Activated CD4-positive, alpha-beta memory T cell treated with anti-CD3 and anti-CD28 coated beads, Interleukin-2, amount 10 ng/mL, durations not matched to agents 7 days and 5 days (primary cell): ENCODE measurements at regions of chr20 and their contacts with region 1.

Region 1: DNA sequence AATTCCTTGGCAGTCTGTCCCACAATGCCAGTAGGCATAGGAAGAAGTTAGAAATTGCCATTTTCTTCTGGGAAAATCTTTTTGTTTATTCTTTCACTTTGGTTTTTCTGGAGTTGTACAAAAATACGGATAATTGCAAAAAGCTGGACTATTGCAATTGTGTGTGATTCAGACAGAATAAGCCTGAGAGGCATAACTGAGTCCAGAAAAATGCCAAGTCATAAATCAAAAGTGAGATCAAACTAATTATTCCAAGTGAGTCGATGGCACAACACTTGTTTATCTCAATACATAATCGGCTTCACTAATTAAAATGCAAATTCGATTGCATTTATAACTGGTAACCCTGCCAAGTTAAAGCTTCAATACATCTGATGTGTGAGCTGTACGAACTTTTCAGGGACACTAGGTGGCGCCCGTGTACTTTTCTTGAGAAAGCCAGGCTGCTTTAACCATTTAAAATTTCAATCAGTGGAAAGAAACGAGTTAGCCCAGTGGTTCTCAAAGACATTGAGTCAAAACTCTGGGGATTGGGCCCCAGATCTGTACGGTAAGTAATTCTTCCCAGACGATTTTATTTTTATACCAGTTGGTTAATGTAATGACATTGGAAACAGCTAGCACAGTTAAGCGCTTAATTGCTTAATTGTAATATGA is 102.6 kb downstream of the LAMP5 start:
- DNase-seq: peak; percentile 49
- H3K4me3 Mint-ChIP-seq: no peak overlapping the region
- H3K27ac Mint-ChIP-seq: no peak overlapping the region
- H3K4me1 Mint-ChIP-seq: no peaks in the 10 kb centered on the region
- H3K27me3 Mint-ChIP-seq: peaks cover 7% of the 10 kb centered on the region

Region 2: DNA sequence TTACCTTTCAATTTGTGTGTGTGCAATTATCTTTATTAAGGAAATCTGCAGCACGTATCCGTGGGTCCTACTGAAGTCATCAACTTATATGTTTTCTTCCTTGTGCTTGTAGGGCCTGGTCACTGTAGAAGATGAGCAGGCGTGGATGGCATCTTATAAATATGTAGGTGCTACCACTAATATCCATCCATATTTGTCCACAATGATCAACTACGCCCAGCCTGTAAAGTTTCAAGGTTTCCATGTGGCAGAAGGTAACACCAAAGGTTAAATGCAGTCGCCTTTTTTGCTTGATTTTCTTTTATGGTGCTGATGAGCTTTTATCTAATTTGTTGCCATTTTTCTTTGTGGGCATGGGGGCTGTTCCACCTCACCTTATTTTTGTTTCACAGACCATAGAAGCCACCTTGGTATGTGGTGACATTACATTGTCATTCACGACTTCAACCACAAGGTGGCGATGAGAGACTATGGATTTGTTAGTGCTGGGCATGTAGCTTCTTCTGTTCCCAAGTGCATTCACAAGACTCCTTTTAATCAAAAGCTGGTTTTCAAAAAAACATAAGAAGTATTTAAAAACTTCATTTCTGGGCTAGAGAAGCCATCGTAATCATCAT is 209.0 kb before region 1 on chr20:
- CTCF ChIA-PET with region 1: interaction called, 70 read pairs
- POLR2A ChIA-PET with region 1: no interaction called
- DNase-seq: peak; percentile 45
- H3K4me3 Mint-ChIP-seq: no peak overlapping the region
- H3K27ac Mint-ChIP-seq: no peak overlapping the region
- H3K4me1 Mint-ChIP-seq: no peaks in the 10 kb centered on the region
- H3K27me3 Mint-ChIP-seq: no peaks in the 10 kb centered on the region

Region 3: GRCh38 chr20:9602847-9603183 is 14.1 kb before region 1 on chr20:
- CTCF ChIA-PET with region 1: interaction called, 11 read pairs
- POLR2A ChIA-PET with region 1: no interaction called
- DNase-seq: no peak
- H3K4me3 Mint-ChIP-seq: no peak overlapping the region
- H3K27ac Mint-ChIP-seq: no peak overlapping the region
- H3K4me1 Mint-ChIP-seq: no peaks in the 10 kb centered on the region
- H3K27me3 Mint-ChIP-seq: no peaks in the 10 kb centered on the region

Region 4: DNA sequence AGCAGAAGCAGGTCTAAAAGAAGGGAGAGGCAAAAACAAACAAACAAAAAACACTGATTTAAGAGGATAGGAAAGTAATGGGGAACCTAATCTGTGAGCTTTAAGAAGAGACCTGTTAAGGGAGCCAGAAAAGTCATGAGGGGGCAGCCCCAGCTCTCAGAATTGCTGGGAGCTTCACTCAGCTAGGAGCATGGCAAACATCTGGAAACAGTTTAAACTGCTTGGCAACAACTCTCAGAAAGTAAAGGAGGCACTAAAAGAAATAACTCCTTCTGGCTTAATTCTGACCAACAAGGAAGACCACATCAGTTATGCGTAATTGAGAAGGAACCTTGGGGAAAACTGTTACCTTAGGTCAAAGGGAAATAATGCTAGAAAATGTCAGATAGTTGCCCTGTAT is 18.8 kb after region 1 on chr20:
- CTCF ChIA-PET with region 1: no interaction called
- POLR2A ChIA-PET with region 1: no interaction called
- DNase-seq: no peak
- H3K4me3 Mint-ChIP-seq: no peak overlapping the region
- H3K27ac Mint-ChIP-seq: no peak overlapping the region
- H3K4me1 Mint-ChIP-seq: no peaks in the 10 kb centered on the region
- H3K27me3 Mint-ChIP-seq: no peaks in the 10 kb centered on the region

Region 5: DNA sequence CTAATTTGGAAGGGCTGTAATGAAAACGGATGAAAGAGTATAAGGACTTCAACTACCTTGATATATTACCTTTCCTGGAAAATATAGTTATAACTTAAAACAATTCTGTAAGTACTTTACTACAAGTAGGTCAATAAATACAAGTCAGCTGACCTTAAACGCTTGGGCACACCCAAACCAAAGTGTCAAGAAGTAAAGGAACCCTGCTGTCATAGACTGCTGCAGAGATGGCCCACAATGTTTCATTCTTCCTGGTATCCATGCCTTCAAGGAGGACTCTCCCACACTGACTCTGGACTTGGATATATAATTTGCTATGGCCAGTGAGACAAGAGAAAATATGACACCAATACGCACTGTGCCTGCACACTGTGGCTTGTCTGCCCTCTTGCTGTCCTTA is 29.4 kb after region 1 on chr20:
- CTCF ChIA-PET with region 1: no interaction called
- POLR2A ChIA-PET with region 1: no interaction called
- DNase-seq: no peak
- H3K4me3 Mint-ChIP-seq: no peak overlapping the region
- H3K27ac Mint-ChIP-seq: no peak overlapping the region
- H3K4me1 Mint-ChIP-seq: no peaks in the 10 kb centered on the region
- H3K27me3 Mint-ChIP-seq: no peaks in the 10 kb centered on the region

Region 6: DNA sequence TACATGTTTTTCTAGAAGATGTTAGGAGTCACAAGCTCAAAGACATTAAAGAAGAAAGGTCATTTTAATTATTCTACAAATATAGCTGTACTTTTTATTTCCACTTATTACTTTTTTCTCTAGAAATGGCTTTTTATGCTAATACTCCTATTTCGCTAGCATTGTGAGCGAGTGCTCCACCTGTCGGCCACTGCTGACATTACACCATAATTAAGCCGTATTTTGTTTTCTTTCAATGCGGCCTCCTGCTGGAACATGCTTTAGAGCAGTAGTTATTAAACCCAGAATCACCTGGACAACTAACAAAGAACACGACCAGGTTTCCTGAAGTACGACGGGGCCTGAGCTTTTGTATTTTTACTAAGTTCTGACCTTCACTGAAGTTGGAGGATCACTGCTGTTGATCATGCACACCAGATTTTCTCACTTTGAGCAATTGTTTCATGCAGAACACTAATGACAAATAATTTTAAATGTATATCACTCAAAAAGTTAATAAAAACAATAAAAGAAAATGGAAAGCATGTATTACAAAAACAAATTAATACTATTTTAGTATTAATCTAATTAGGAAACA is 296.0 kb after region 1 on chr20:
- CTCF ChIA-PET with region 1: interaction called, 45 read pairs
- POLR2A ChIA-PET with region 1: no interaction called
- DNase-seq: peak; percentile 26
- H3K4me3 Mint-ChIP-seq: no peak overlapping the region
- H3K27ac Mint-ChIP-seq: no peak overlapping the region
- H3K4me1 Mint-ChIP-seq: no peaks in the 10 kb centered on the region
- H3K27me3 Mint-ChIP-seq: peaks cover 6% of the 10 kb centered on the region

Region 7: DNA sequence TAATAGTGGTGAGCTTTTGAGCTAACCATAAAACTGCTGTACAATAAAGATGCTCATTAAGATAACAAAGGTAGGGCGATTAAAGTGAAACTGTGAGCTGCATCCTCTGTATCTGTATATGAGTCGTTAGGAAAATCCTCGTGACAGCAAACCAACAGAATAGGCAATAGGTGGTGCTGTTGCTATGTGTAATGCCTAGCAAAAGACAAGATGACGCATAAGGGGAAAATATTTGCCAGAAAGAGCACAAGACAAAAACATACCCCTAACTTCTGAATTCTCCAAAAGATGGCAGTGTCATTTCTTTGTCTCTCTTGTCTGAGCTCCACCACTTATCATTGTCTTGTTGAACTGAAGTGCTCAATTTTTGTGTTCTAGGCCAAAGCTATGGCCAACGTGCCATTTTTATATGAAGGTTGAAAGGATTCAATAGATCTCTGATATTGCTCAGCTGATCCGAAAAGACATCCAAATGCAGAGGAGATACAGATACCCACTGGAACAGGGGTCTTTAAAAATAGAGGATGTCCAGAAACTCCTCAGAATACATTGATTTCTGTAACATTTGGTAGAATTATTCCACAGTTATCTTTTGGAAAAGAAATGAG is 361.5 kb after region 1 on chr20:
- CTCF ChIA-PET with region 1: interaction called, 11 read pairs
- POLR2A ChIA-PET with region 1: no interaction called
- DNase-seq: peak; percentile 32
- H3K4me3 Mint-ChIP-seq: no peak overlapping the region
- H3K27ac Mint-ChIP-seq: no peak overlapping the region
- H3K4me1 Mint-ChIP-seq: no peaks in the 10 kb centered on the region
- H3K27me3 Mint-ChIP-seq: peaks cover 6% of the 10 kb centered on the region

Region 8: GRCh38 chr20:10090588-10091166 is 473.7 kb after region 1 on chr20:
- CTCF ChIA-PET with region 1: interaction called, 17 read pairs
- POLR2A ChIA-PET with region 1: no interaction called
- DNase-seq: peak; percentile 19
- H3K4me3 Mint-ChIP-seq: no peak overlapping the region
- H3K27ac Mint-ChIP-seq: no peak overlapping the region
- H3K4me1 Mint-ChIP-seq: no peaks in the 10 kb centered on the region
- H3K27me3 Mint-ChIP-seq: no peaks in the 10 kb centered on the region